Naive thymus-derived CD4-positive, alpha-beta T cell (primary cell): ENCODE measurements at regions of chr6 and their contacts with region 1.

Region 1: DNA sequence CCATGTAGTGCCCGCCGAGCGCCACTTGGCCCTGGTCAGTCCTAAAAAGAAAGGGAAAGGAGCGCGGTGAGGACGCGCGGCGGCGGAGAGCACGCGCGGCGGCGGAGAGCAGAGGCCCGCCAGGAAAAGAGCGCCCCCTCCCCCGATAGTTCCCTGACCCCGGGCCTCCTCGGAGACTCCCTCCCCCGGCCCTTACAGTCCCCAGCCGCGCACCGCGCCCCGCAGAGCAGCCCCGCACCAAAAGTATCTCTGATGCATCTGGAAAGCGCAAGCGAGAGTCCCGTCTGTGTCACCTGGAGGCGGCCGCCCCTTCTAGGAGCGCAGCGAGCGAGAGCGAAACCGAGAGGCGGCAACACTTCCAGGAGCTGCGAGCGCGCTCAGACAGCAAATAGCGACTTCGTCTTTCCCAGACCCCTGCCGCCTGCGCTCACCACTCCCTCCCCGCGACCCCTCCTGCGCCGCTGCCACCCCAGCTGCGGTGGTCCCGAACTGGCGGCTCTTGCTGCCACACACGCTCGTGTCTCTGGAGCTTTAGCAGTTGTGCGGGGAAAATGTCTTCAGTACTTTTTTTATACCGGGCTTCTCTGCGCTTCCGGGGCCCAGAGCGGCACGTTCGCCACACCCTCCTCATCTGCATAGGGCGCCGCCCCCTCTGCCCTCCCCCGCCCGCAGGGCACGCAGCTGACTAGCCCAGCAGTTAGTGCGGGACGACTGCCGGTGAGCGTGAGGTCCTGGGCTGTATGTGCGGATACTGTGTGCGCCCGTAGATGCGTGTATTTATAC is at the start of gene TENT5A:
- DNase-seq: peak; percentile 75 to 91 (median 90)
- ATAC-seq: peak; percentile 82
- H3K4me3 ChIP-seq: peak within 1 kb of the TSS; percentile 71
- H3K4me3 Mint-ChIP-seq: peak within 1 kb of the TSS; percentile 87 to 99 (median 98)
- H3K27ac ChIP-seq: peak within 1 kb of the TSS; percentile 74
- H3K27ac Mint-ChIP-seq: peak within 1 kb of the TSS; percentile 83 to 99 (median 96)
- H3K4me1 ChIP-seq: peaks cover 4 to 8% of the 10 kb centered on the region in 2 donors
- H3K4me1 Mint-ChIP-seq: peaks cover 23 to 42% (median 38%) of the 10 kb centered on the region in 7 donors
- H3K27me3 ChIP-seq: no peaks in the 10 kb centered on the region
- H3K27me3 Mint-ChIP-seq: peaks cover 0 to 67% (median 0%) of the 10 kb centered on the region in 5 donors
- total RNA-seq, gene TENT5A: 0.80 to 12.5 (median 7.4) TPM

Region 2: DNA sequence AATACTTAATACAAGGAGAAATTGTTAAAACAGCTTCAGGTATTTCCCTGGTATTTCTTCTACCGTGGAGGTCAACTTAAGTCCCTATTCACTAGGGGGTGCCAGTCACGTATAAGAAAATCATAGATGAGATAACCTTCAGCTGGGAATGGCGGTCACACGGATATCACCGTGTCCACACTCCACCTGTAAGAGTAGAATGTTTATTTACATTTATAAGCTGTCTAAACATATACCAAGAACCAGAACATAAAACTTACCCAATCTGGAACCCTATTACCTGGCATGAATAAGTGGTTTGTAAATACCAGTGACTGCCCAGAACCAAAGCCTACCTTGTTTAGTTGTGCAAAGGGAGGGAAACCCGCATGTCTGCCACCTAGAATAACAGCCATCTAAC is 1803.1 kb before region 1 on chr6:
- CTCF ChIA-PET with region 1: interaction called, 6 read pairs
- POLR2A ChIA-PET with region 1: interaction called, 3 read pairs
- intact Hi-C with region 1: loop called (anchors 1 to 5 kb)
- DNase-seq: peak in 8 of 9 donors; percentile 36 to 61 (median 44)
- ATAC-seq: peak; percentile 65
- H3K4me3 ChIP-seq: no peak overlapping the region
- H3K4me3 Mint-ChIP-seq: peak overlapping the region in 5 of 10 donors; percentile 10 to 55 (median 16)
- H3K27ac ChIP-seq: no peak overlapping the region
- H3K27ac Mint-ChIP-seq: peak overlapping the region in 1 of 9 donors; percentile 56
- H3K4me1 ChIP-seq: peaks cover 4 to 16% of the 10 kb centered on the region in 2 donors
- H3K4me1 Mint-ChIP-seq: peaks cover 13 to 25% (median 19%) of the 10 kb centered on the region in 7 donors
- H3K27me3 ChIP-seq: no peaks in the 10 kb centered on the region
- H3K27me3 Mint-ChIP-seq: peaks cover 32 to 57% (median 43%) of the 10 kb centered on the region in 5 donors

Region 3: GRCh38 chr6:80106418-80107235 is 1645.7 kb before region 1 on chr6 and contains the start of gene BCKDHB:
- CTCF ChIA-PET with region 1: interaction called, 3 read pairs
- POLR2A ChIA-PET with region 1: interaction called, 15 read pairs
- intact Hi-C with region 1: loop called (anchors 1 kb)
- DNase-seq: peak; percentile 91 to 99 (median 98)
- ATAC-seq: peak; percentile 99
- H3K4me3 ChIP-seq: peak within 1 kb of the TSS; percentile 77
- H3K4me3 Mint-ChIP-seq: peak within 1 kb of the TSS; percentile 86 to 98 (median 94)
- H3K27ac ChIP-seq: peak within 1 kb of the TSS; percentile 75
- H3K27ac Mint-ChIP-seq: peak within 1 kb of the TSS; percentile 78 to 94 (median 91)
- H3K4me1 ChIP-seq: peaks cover 0 to 6% of the 10 kb centered on the region in 2 donors
- H3K4me1 Mint-ChIP-seq: peaks cover 17 to 34% (median 24%) of the 10 kb centered on the region in 7 donors
- H3K27me3 ChIP-seq: no peaks in the 10 kb centered on the region
- H3K27me3 Mint-ChIP-seq: peaks cover 5 to 16% (median 11%) of the 10 kb centered on the region in 5 donors
- total RNA-seq, gene BCKDHB: 13.8 to 22.1 (median 17.4) TPM

Region 4: GRCh38 chr6:80338201-80338836 is 1414.0 kb before region 1 on chr6:
- CTCF ChIA-PET with region 1: interaction called, 10 read pairs
- POLR2A ChIA-PET with region 1: interaction called, 4 read pairs
- intact Hi-C with region 1: loop called (anchors 1 kb)
- DNase-seq: peak; percentile 16 to 72 (median 55)
- ATAC-seq: peak; percentile 84
- H3K4me3 ChIP-seq: no peak overlapping the region
- H3K4me3 Mint-ChIP-seq: no peak overlapping the region
- H3K27ac ChIP-seq: no peak overlapping the region
- H3K27ac Mint-ChIP-seq: no peak overlapping the region
- H3K4me1 ChIP-seq: no peaks in the 10 kb centered on the region
- H3K4me1 Mint-ChIP-seq: peaks cover 0 to 6% (median 0%) of the 10 kb centered on the region in 7 donors
- H3K27me3 ChIP-seq: no peaks in the 10 kb centered on the region
- H3K27me3 Mint-ChIP-seq: no peaks in the 10 kb centered on the region

Region 5: DNA sequence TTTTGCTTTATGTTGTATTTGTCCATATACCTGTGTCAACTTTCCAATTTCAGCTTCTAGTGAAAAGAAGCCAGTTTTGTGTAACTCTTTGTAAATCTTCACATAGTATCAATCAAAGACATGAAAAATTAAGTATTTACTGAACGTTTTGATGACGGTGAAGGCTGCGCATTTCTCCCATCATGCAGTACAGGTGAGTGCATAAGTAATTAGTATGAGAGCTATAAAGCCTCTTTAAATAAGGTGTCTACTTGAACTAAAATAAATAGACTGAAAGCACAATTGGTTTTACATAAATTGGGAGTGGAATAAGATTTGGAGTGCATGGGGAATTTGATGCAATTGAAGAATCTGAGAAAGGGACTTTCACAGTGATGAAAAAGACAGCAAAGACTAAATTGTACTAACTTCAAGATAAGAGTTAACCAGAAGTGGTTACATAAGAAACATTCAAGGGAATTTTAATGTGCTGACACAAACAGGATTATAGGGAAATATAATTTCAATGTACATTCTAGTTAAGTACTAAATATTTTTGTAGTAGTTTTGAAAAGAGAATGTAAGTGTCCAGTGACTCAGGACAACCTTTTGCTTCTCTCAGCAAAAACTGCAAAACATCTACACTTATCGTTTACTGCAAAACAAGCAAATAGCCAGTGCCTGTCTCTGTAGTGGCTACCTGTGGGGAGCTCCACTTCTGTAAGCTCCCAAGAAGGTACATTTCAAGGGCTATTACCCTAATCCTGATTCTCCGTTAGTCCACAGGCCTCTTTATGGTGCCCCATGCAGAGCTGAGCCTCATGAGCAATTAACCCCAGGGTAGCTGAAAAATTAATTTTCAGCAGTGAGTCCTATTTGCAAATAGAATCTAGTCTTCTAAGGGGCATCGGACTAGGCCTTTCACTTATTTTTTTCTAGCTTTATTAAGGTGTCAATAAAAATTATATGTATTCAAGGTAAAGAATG is 12.8 kb before region 1 on chr6:
- CTCF ChIA-PET with region 1: interaction called, 3 read pairs
- POLR2A ChIA-PET with region 1: interaction called, 10 read pairs
- intact Hi-C with region 1: no loop called
- DNase-seq: no peak
- ATAC-seq: no peak
- H3K4me3 ChIP-seq: no peak overlapping the region
- H3K4me3 Mint-ChIP-seq: no peak overlapping the region
- H3K27ac ChIP-seq: no peak overlapping the region
- H3K27ac Mint-ChIP-seq: no peak overlapping the region
- H3K4me1 ChIP-seq: no peaks in the 10 kb centered on the region
- H3K4me1 Mint-ChIP-seq: peaks cover 0 to 7% (median 0%) of the 10 kb centered on the region in 7 donors
- H3K27me3 ChIP-seq: no peaks in the 10 kb centered on the region
- H3K27me3 Mint-ChIP-seq: peaks cover 0 to 2% (median 0%) of the 10 kb centered on the region in 5 donors

Region 6: GRCh38 chr6:83192871-83193746 is 1440.8 kb after region 1 on chr6 and contains the starts of genes PGM3 and RWDD2A:
- CTCF ChIA-PET with region 1: no interaction called
- POLR2A ChIA-PET with region 1: no interaction called
- intact Hi-C with region 1: loop called (anchors 2 to 5 kb)
- DNase-seq: peak; percentile 84 to 90 (median 88)
- ATAC-seq: peak; percentile 99
- H3K4me3 ChIP-seq: peak within 1 kb of the TSS; percentile 93
- H3K4me3 Mint-ChIP-seq: peak within 1 kb of the TSS; percentile 92 to 99 (median 98)
- H3K27ac ChIP-seq: peak within 1 kb of the TSS; percentile 91
- H3K27ac Mint-ChIP-seq: peak within 1 kb of the TSS; percentile 89 to 99 (median 97)
- H3K4me1 ChIP-seq: peaks cover 5 to 12% of the 10 kb centered on the region in 2 donors
- H3K4me1 Mint-ChIP-seq: peaks cover 24 to 68% (median 63%) of the 10 kb centered on the region in 7 donors
- H3K27me3 ChIP-seq: no peaks in the 10 kb centered on the region
- H3K27me3 Mint-ChIP-seq: peaks cover 0 to 6% (median 0%) of the 10 kb centered on the region in 5 donors
- total RNA-seq, gene PGM3: 22.0 to 37.3 (median 27.6) TPM
- total RNA-seq, gene RWDD2A: 1.8 to 6.4 (median 2.7) TPM